ENCODE measurements at regions of chr3 and their contacts with region 1.

Region 1: DNA sequence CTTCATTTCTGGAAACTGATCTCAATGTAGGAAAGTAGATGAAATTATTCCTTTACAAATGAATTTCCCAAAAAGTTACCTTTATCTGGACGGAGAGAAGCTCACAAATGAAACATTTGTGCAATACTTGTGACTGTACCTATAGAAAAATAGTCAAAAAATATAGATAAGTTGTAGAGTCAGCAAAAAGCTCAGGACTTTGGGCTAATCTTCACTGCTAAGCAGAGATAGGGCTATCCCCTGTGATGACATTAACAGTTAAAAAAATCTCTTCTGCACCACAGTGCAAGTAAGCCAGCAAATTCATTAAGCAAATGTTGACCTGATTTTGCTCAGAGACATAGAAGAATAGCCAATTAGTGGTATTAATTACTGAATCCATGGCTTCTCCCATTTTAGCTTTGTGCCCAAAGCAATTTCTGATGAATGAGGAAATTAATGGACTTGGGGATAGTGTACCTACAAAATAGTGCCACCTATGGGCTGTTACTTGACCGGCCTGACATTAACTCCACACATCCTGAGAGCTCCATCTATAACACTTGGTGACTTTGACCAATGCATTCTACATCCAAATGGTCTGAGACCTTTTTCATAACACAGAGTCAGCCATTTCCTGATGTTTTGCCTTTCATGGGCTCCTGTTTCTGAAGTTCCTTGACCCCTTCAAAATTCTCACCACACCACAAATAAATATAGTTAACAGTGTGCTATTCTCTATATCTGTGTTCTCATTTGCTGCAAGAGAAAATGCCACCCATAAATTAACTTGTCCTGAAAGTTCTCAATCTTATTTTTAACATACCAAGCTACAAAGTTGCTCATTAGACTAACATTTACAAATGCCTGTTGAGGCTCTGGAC is 105.0 kb downstream of the SSR3 start:
- DNase-seq: peak; percentile 38 to 48 (median 39)
- H3K4me3 ChIP-seq: no peak overlapping the region
- H3K27ac ChIP-seq: no peak overlapping the region
- H3K4me1 ChIP-seq: peaks cover 0 to 13% (median 1%) of the 10 kb centered on the region in 4 experiments
- H3K27me3 ChIP-seq: no peaks in the 10 kb centered on the region

Region 2: GRCh38 chr3:156356537-156357363 is 93.2 kb before region 1 on chr3:
- CTCF ChIA-PET with region 1: no interaction called
- POLR2A ChIA-PET with region 1: no interaction called
- DNase-seq: peak in 2 of 3 donors; percentile 15 to 21
- H3K4me3 ChIP-seq: no peak overlapping the region
- H3K27ac ChIP-seq: no peak overlapping the region
- H3K4me1 ChIP-seq: peaks cover 0 to 12% (median 1%) of the 10 kb centered on the region in 4 experiments
- H3K27me3 ChIP-seq: no peaks in the 10 kb centered on the region

Region 3: DNA sequence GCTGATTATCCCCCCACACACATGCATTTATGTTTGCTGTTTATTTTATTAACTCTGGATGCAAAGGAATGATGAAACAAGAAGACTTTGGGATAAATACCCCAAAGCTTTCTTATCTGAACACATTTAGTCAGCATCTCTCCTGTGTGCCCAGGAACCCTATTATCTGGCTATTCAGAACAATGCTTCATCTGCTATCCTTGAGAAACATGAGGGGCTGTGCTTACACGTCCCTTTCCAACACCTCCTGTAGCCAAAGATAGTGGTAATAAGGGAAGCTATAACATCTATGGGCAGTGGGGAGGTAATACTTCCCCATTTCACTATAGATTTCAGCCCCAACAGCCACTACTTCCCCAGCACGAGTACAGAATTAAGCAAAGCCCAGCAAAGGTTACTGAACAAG is 10.3 kb after region 1 on chr3:
- CTCF ChIA-PET with region 1: interaction called, 23 read pairs
- POLR2A ChIA-PET with region 1: no interaction called
- DNase-seq: peak; percentile 53 to 93 (median 86)
- H3K4me3 ChIP-seq: no peak overlapping the region
- H3K27ac ChIP-seq: no peak overlapping the region
- H3K4me1 ChIP-seq: peaks cover 0 to 9% (median 5%) of the 10 kb centered on the region in 4 experiments
- H3K27me3 ChIP-seq: no peaks in the 10 kb centered on the region

Region 4: GRCh38 chr3:156586905-156587759 is 137.2 kb after region 1 on chr3:
- CTCF ChIA-PET with region 1: no interaction called
- POLR2A ChIA-PET with region 1: no interaction called
- DNase-seq: peak in 2 of 3 donors; percentile 40 to 47
- H3K4me3 ChIP-seq: no peak overlapping the region
- H3K27ac ChIP-seq: no peak overlapping the region
- H3K4me1 ChIP-seq: peaks cover 0 to 30% (median 5%) of the 10 kb centered on the region in 4 experiments
- H3K27me3 ChIP-seq: no peaks in the 10 kb centered on the region